HepG2 (cell line): ENCODE measurements at regions of chr14 and their contacts with region 1.

Region 1: DNA sequence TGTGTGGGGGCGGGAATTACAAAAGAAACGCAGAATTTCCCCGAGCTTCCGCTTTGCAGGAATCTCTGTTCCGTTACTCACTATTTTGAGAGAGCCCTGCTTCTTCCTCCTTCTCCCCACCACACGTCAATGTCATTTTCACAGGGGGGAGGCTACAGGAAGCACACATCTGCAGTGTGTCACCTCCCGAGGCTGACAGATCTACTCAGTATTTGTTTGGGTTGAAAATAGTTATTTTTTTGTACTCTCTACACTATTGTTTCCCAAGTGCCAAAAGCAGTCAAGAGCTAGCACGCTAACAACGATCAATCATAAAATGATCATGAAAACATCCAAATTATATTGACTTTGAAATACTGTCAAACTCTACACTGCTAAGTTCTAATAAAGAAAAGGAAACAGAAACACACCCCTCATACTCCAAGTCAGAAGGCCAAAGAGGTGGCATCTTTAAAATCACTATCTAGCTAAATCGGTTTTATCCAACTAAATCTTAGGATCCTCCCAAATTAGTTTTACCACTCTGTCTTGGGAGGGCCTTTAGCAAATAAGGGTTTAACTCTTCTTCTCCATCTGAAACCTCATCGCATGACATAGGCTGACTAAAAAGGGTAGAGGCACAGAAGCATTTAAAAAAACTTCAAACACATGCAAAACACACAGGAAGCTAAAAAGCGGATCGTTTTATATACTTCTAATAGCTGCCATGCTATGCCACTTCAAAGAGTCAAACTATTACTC is 51.8 kb downstream of the FOXN3 start:
- DNase-seq: no peak
- ATAC-seq: no peak
- H3K4me3 ChIP-seq: no peak overlapping the region
- H3K27ac ChIP-seq: no peak overlapping the region
- H3K4me1 ChIP-seq: peaks cover 66% of the 10 kb centered on the region
- H3K27me3 ChIP-seq: no peaks in the 10 kb centered on the region
- CTCF ChIP-seq: no peak
- EP300 ChIP-seq: no peak
- POLR2A ChIP-seq: no peak
- RAD21 ChIP-seq: no peak

Region 2: GRCh38 chr14:89226801-89227495 is 138.3 kb before region 1 on chr14:
- CTCF ChIA-PET with region 1: no interaction called
- POLR2A ChIA-PET with region 1: no interaction called
- in situ Hi-C with region 1: no loop called
- intact Hi-C with region 1: no loop called
- DNase-seq: no peak
- ATAC-seq: no peak
- H3K4me3 ChIP-seq: no peak overlapping the region
- H3K27ac ChIP-seq: no peak overlapping the region
- H3K4me1 ChIP-seq: peaks cover 48% of the 10 kb centered on the region
- H3K27me3 ChIP-seq: no peaks in the 10 kb centered on the region
- CTCF ChIP-seq: no peak
- EP300 ChIP-seq: no peak
- POLR2A ChIP-seq: no peak
- RAD21 ChIP-seq: no peak

Region 3: DNA sequence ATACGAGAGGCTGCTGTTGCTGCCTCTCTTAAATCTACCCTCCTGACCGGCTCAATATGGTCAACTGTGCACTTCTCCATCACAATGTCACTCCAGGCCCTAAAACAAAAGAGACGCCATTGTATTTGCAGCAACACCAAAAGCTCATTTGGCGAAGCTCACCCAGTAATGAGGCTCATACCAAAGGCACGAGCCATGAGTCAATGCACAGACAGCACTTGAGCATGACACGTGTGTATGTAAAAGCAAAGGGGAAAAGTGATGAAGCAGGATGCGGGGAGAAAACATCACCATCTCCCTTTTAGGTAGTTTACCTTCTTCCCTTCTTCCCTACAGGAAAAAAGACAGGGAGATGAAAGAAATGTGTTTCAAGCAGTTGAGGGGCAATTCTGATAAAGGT is 98.5 kb before region 1 on chr14:
- CTCF ChIA-PET with region 1: no interaction called
- POLR2A ChIA-PET with region 1: no interaction called
- in situ Hi-C with region 1: no loop called
- intact Hi-C with region 1: no loop called
- DNase-seq: no peak
- ATAC-seq: no peak
- H3K4me3 ChIP-seq: no peak overlapping the region
- H3K27ac ChIP-seq: no peak overlapping the region
- H3K4me1 ChIP-seq: peaks cover 56% of the 10 kb centered on the region
- H3K27me3 ChIP-seq: no peaks in the 10 kb centered on the region
- CTCF ChIP-seq: no peak
- EP300 ChIP-seq: no peak
- POLR2A ChIP-seq: no peak
- RAD21 ChIP-seq: no peak

Region 4: GRCh38 chr14:89336338-89336737 is 28.9 kb before region 1 on chr14:
- CTCF ChIA-PET with region 1: no interaction called
- POLR2A ChIA-PET with region 1: interaction called, 14 read pairs
- in situ Hi-C with region 1: no loop called
- intact Hi-C with region 1: no loop called
- DNase-seq: peak; percentile 27
- ATAC-seq: peak; percentile 21
- H3K4me3 ChIP-seq: no peak overlapping the region
- H3K27ac ChIP-seq: no peak overlapping the region
- H3K4me1 ChIP-seq: peaks cover 72% of the 10 kb centered on the region
- H3K27me3 ChIP-seq: no peaks in the 10 kb centered on the region
- CTCF ChIP-seq: peak; percentile 25; the same call in 1 of the 2 replicates
- EP300 ChIP-seq: no peak
- POLR2A ChIP-seq: no peak
- RAD21 ChIP-seq: no peak

Region 5: DNA sequence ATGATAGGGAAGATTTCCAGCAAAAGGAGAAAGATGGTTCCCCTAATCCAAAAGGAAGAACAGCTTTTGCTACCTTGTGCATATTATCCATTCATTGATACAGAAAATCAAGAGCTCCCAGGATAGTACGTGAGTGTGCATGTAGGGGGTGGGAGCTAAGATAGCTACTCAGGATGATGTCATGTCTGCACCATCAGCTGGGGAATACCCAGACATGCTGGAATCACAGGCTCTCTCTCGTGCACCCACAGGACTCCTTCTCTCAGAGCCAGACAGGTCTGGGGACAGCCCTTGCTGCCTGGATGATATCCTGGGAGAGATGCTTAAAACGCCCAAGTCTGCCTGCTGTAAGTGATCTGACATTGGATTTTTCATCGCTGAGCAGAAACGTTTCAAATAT is 12.9 kb after region 1 on chr14:
- CTCF ChIA-PET with region 1: no interaction called
- POLR2A ChIA-PET with region 1: interaction called, 12 read pairs
- in situ Hi-C with region 1: no loop called
- intact Hi-C with region 1: no loop called
- DNase-seq: no peak
- ATAC-seq: no peak
- H3K4me3 ChIP-seq: no peak overlapping the region
- H3K27ac ChIP-seq: no peak overlapping the region
- H3K4me1 ChIP-seq: peaks cover 63% of the 10 kb centered on the region
- H3K27me3 ChIP-seq: no peaks in the 10 kb centered on the region
- CTCF ChIP-seq: no peak
- EP300 ChIP-seq: no peak
- POLR2A ChIP-seq: no peak
- RAD21 ChIP-seq: no peak

Region 6: DNA sequence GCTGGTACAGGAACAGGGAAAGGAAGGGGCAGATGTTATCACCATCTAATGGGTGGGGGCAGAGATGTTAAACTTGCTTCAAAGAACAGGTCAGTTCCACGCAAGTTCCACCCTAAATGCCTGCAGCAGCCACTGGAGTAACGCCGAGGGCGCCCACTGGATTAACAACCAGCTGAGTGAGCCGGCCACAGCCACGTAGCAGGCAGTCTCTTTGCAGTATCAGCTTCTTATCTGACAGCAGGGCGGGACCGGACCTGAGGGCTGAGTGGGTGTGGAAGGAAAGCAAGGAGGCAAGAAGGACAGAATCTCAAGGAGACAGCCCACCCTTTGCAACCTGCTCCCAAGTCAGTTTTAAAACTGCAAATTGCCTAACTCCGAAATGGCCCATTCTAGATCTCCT is 90.2 kb after region 1 on chr14:
- CTCF ChIA-PET with region 1: no interaction called
- POLR2A ChIA-PET with region 1: no interaction called
- in situ Hi-C with region 1: no loop called
- intact Hi-C with region 1: no loop called
- DNase-seq: no peak
- ATAC-seq: no peak
- H3K4me3 ChIP-seq: no peak overlapping the region
- H3K27ac ChIP-seq: no peak overlapping the region
- H3K4me1 ChIP-seq: peaks cover 40% of the 10 kb centered on the region
- H3K27me3 ChIP-seq: no peaks in the 10 kb centered on the region
- CTCF ChIP-seq: no peak
- EP300 ChIP-seq: no peak
- POLR2A ChIP-seq: no peak
- RAD21 ChIP-seq: no peak

Region 7: GRCh38 chr14:89578156-89578555 is 212.9 kb after region 1 on chr14:
- CTCF ChIA-PET with region 1: no interaction called
- POLR2A ChIA-PET with region 1: no interaction called
- in situ Hi-C with region 1: no loop called
- intact Hi-C with region 1: no loop called
- DNase-seq: no peak
- ATAC-seq: no peak
- H3K4me3 ChIP-seq: no peak overlapping the region
- H3K27ac ChIP-seq: no peak overlapping the region
- H3K4me1 ChIP-seq: peaks cover 6% of the 10 kb centered on the region; the same call in 1 of the 2 replicates
- H3K27me3 ChIP-seq: no peaks in the 10 kb centered on the region
- CTCF ChIP-seq: no peak
- EP300 ChIP-seq: no peak
- POLR2A ChIP-seq: no peak
- RAD21 ChIP-seq: no peak